ENCODE measurements at regions of chr3 and their contacts with region 1.

Region 1: DNA sequence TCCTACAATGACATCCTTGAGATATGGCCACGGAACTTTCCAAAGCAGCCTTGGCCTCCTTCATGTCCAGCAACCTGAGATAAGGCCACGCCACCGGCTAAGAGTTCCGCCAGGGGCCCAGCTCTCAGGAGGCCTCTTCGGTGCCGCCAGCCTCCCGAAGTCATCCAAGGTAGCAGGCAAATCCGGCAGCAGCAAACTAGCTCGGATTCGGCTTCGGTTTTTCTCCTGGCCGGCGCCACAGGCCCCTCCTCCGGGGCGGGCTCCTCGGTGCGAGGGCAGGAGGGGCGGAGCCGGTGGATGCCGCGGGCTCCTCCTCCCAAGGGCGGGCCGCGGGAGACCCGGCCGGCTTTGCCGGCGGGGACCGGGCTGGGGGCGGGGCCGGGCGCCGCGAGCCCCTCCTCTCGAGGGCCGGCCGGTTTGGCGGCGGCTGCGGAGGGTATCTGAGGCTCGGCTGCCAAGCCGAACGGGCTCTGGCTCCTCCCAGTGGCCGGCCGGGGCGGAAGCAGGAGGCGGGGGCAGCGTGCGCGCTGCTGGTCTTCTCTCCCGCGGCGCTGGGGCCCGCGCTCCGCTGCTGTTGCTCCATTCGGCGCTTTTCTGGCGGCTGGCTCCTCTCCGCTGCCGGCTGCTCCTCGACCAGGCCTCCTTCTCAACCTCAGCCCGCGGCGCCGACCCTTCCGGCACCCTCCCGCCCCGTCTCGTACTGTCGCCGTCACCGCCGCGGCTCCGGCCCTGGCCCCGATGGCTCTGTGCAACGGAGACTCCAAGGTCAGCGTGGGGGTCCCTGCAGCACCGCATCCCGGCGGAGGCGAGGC is at the start of gene GMPS:
- DNase-seq: peak; percentile 95
- H3K4me3 ChIP-seq: peak within 1 kb of the TSS; percentile 77 to 94 (median 93)
- H3K27ac ChIP-seq: peak within 1 kb of the TSS; percentile 64
- H3K4me1 ChIP-seq: peaks cover 17% of the 10 kb centered on the region
- H3K27me3 ChIP-seq: no peaks in the 10 kb centered on the region
- CTCF ChIP-seq: peak; percentile 2 to 53
- total RNA-seq, gene GMPS: 34.2 to 90.4 TPM

Region 2: DNA sequence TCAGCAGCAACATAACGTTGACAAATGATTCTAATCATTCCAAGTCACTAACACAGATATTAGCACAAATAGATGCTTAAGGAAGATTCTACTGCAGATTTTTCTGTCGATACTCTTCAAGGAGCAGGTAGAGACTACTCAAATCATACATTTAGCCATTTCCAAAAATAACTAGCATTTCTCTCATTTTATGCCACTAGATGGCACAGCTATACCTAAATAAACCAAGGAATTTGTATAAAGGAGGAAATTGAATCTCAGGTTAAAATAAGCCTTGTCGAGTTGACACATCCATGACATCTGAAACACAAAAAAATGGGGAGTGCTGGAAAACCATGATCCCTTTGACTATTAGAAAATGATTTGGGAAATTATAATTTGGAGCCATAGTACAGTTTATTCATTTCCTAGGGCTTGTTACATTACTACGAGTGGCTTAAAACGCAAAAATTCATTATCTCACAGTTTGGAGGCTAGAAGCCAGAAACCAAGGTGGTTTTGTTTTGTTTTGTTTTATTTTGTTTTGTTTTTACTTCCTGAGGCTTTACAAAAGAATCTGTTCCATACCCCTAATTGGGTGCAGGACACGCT is 517.3 kb before region 1 on chr3:
- CTCF ChIA-PET with region 1: no interaction called
- dilution Hi-C with region 1: no loop called
- in situ Hi-C with region 1: no loop called
- intact Hi-C with region 1: loop called (anchors 5 kb)
- DNase-seq: peak; percentile 33
- H3K4me3 ChIP-seq: no peak overlapping the region
- H3K27ac ChIP-seq: no peak overlapping the region
- H3K4me1 ChIP-seq: peaks cover 5% of the 10 kb centered on the region
- H3K27me3 ChIP-seq: no peaks in the 10 kb centered on the region
- CTCF ChIP-seq: peak; percentile 47 to 56

Region 3: DNA sequence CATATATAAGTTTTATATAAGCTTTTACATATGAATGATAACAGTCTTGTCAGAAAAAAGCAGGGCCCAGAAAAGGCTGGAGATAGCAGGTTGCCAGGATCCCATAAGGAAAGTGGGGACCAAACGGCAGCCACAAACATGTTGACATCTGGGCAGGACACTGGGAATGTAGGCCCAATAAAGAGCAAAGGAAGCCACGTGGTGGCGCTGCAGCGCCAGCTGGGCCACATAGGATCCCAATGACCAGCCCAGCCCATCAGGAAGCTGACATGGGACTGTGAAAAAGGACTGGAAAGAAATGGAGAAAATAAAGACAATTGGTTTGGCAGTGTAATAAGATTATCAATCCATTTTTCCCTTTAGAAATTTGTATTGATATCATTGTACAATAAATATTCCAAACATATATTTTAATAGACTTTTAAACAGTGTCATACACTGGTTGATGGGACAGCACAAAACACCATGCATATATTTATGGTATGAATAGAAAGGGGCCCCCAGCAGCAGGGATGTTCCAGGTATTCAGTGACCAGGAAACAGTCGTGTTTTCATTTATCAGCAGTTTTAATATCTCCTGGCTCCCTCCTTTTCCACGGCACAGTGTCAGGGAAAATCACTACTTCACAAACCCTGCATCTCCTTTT is 487.8 kb before region 1 on chr3:
- CTCF ChIA-PET with region 1: no interaction called
- dilution Hi-C with region 1: no loop called
- in situ Hi-C with region 1: no loop called
- intact Hi-C with region 1: loop called (anchors 10 kb)
- DNase-seq: peak; percentile 52
- H3K4me3 ChIP-seq: no peak overlapping the region
- H3K27ac ChIP-seq: no peak overlapping the region
- H3K4me1 ChIP-seq: peaks cover 6% of the 10 kb centered on the region
- H3K27me3 ChIP-seq: no peaks in the 10 kb centered on the region
- CTCF ChIP-seq: peak; percentile 81 to 94

Region 4: DNA sequence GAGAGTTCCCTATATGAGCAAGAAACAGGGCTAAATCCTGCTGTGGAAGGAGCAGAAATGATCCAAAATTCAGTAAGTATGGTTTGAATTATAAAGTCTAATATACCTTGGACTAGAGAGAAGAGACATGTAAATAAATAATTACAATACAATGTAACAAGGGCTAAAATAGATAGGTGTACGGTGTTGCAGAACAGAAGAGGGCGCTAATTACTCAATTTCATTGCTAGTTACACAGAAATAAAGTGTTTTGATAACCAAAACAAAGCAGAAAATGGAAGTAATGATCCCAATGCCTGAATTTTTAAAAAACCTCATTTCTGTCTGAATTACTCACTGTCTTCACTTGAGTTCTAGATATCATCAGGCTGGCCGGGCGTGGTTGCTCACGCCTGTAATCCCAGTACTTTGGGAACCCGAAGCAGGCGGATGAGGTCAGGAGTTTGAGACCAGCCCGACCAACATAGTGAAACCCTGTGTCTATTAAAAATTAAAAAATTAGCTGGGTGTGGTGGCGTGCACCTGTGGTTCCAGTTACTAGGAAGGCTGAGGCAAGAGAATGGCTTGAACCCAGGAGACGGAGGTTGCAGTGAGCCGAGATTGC is 117.2 kb before region 1 on chr3:
- CTCF ChIA-PET with region 1: no interaction called
- dilution Hi-C with region 1: no loop called
- in situ Hi-C with region 1: no loop called
- intact Hi-C with region 1: loop called (anchors 1 kb)
- DNase-seq: no peak
- H3K4me3 ChIP-seq: no peak overlapping the region
- H3K27ac ChIP-seq: no peak overlapping the region
- H3K4me1 ChIP-seq: no peaks in the 10 kb centered on the region
- H3K27me3 ChIP-seq: no peaks in the 10 kb centered on the region
- CTCF ChIP-seq: peak; percentile 48 to 54

Region 5: DNA sequence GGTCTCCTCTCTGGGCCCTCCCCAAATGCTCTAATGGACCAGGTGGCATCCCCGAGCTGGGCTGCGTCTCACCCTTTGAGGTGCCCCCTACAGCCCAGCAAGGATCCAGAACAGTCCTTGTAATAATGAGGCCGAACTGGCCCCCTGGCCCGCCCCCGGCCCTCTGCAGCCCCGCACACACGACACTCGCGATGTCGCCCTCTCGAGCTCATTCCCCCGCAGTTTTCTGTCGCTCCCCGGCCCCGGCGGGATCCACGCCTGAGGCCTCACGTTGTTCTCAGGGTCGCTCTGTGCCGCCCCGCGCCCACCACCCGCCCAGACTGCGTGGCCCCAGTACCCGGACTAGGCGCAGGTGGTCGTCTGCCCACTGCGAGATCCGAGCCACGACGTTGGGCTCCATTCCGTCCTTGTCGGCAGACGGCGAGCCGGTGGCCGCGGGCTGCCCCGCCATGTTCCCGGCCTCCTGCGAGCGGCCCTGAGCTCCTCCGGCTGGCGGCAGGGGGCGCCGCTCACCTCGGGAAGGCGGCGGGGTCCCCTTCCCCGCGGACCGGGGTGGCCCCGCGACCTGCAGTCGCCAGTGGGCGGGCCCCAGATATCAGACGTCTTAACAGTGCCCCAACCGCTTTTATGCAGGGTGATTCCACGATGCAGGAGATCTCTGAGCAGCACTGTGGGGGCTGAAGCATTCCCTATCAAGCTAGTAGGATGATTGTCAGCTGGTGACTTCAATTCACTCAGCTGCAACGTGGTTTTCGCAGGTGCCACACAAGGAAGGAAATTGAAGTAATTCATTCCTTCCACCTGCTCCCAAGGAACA is 64.3 kb before region 1 on chr3 and contains the start of gene C3orf33:
- CTCF ChIA-PET with region 1: no interaction called
- dilution Hi-C with region 1: no loop called
- in situ Hi-C with region 1: no loop called
- intact Hi-C with region 1: loop called (anchors 1 kb)
- DNase-seq: peak; percentile 57
- H3K4me3 ChIP-seq: peak within 1 kb of the TSS; percentile 82 to 94 (median 85)
- H3K27ac ChIP-seq: no peak within 1 kb of the TSS
- H3K4me1 ChIP-seq: no peaks in the 10 kb centered on the region
- H3K27me3 ChIP-seq: no peaks in the 10 kb centered on the region
- CTCF ChIP-seq: peak; percentile 64 to 82
- total RNA-seq, gene C3orf33: 1.9 to 3.0 TPM

Region 6: DNA sequence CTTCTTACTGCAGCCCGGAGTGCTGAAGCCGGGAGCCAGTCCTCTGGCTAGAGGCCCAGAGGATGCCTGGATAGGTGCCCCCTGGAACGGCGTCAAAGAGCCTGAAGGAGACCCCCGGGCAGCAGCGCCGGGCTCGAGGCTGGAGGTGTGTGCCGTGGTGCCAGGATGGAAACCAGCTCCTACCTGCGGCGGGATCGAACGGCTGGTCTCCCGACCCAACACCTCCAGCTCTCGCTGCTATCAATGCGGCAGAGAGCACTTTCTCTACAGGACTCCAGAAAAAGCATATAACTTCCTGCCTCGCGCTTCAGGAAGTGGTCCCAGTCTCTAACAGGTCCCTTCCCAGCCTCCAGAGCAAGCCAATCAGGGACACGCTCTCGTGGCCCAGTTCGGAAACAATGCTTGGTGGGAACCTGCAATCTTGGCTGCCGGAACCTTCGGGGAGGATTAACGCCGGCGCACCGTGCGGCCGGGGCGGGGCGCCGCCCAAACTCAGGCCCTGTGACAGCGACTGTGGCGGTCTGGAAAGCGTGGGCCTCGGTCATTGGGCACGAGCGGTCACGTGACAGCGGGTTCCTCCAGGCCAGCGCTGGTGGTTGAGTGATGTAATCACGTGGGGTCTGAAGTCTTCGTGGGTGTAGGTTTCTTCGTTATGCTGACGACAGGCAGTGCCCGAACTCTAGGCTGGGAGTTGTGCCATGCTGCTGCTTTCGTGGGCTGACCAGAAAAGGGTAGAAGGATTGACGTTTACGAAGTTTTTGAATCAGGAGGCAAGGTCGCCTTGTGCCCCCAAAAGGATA is 16.0 kb before region 1 on chr3 and contains the start of gene SLC33A1:
- CTCF ChIA-PET with region 1: no interaction called
- dilution Hi-C with region 1: no loop called
- in situ Hi-C with region 1: no loop called
- intact Hi-C with region 1: loop called (anchors 1 kb)
- DNase-seq: peak; percentile 100
- H3K4me3 ChIP-seq: peak within 1 kb of the TSS; percentile 77 to 94 (median 93)
- H3K27ac ChIP-seq: peak within 1 kb of the TSS; percentile 92
- H3K4me1 ChIP-seq: peaks cover 13% of the 10 kb centered on the region
- H3K27me3 ChIP-seq: no peaks in the 10 kb centered on the region
- CTCF ChIP-seq: no peak
- total RNA-seq, gene SLC33A1: 35.0 to 52.7 TPM

Measured in mammary epithelial cell (primary cell).